ENCODE measurements at regions of chr6 and their contacts with region 1.

Region 1: GRCh38 chr6:167141667-167142432 is 15.9 kb downstream of the GPR31 start:
- DNase-seq: no peak
- ATAC-seq: peak; percentile 96
- H3K4me3 ChIP-seq: no peak overlapping the region
- H3K27ac ChIP-seq: no peak overlapping the region
- H3K4me1 ChIP-seq: peaks cover 10% of the 10 kb centered on the region
- H3K27me3 ChIP-seq: no peaks in the 10 kb centered on the region
- CTCF ChIP-seq: peak; percentile 94 to 98 (median 96); a peak in 5 of 6 replicates
- EP300 ChIP-seq: no peak
- POLR2A ChIP-seq: no peak
- RAD21 ChIP-seq: peak; percentile 99

Region 2: GRCh38 chr6:166950443-166950821 is 191.4 kb before region 1 on chr6:
- CTCF ChIA-PET with region 1: interaction called, 18 read pairs
- POLR2A ChIA-PET with region 1: interaction called, 7 read pairs
- RAD21 ChIA-PET with region 1: interaction called, 10 read pairs
- SMC1A ChIA-PET with region 1: interaction called, 12 read pairs
- in situ Hi-C with region 1: no loop called
- intact Hi-C with region 1: loop called (anchors 2 kb)
- DNase-seq: no peak
- ATAC-seq: peak; percentile 68
- H3K4me3 ChIP-seq: peak overlapping the region; percentile 71
- H3K27ac ChIP-seq: peak overlapping the region; percentile 96
- H3K4me1 ChIP-seq: peaks cover 42% of the 10 kb centered on the region
- H3K27me3 ChIP-seq: no peaks in the 10 kb centered on the region
- CTCF ChIP-seq: no peak
- EP300 ChIP-seq: no peak
- POLR2A ChIP-seq: peak; percentile 76
- RAD21 ChIP-seq: no peak

Region 3: DNA sequence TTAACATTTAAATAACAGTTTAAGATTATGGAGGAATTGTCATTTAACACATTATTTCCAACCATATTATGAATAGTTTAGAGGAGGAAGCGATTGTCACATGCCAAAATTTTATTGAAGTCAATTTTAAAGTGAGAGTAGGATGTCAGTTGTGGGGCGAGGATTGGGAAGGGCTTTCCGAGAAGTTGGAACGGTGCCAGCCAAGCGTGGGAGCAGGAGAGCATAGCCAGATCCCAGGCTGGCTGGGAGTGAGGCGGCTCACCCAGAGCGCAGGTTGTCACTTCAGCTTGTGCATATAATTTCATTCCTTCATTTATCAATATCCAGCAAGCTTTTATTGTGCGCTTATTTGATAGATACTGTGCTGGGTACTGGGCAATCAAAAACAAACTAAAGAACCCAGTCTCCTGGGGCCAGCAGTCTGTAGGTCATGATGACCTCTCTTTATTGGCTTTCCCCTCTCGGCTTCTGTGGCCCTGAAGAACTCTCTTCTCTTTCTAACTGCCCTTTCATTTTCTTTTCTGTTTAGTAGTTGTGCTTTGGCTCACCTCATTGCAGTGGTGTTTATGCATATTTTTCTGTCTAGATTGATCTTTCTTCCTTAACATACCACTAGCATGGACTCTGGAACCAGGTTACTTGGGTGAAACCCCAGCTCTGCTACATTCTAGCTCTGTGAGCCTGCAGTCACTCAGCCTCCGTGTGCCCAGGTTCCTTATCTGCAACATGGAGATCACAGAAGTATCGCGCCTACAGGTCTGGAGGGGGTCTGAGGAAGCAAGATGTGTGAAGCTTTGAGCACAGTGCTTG is 136.3 kb before region 1 on chr6:
- CTCF ChIA-PET with region 1: interaction called, 54 read pairs
- POLR2A ChIA-PET with region 1: interaction called, 5 read pairs
- RAD21 ChIA-PET with region 1: interaction called, 56 read pairs
- SMC1A ChIA-PET with region 1: interaction called, 61 read pairs
- in situ Hi-C with region 1: loop called (anchors 25 kb)
- intact Hi-C with region 1: no loop called
- DNase-seq: no peak
- ATAC-seq: no peak
- H3K4me3 ChIP-seq: no peak overlapping the region
- H3K27ac ChIP-seq: no peak overlapping the region
- H3K4me1 ChIP-seq: no peaks in the 10 kb centered on the region
- H3K27me3 ChIP-seq: no peaks in the 10 kb centered on the region
- CTCF ChIP-seq: no peak
- EP300 ChIP-seq: no peak
- POLR2A ChIP-seq: no peak
- RAD21 ChIP-seq: no peak

Region 4: GRCh38 chr6:167079853-167080297 is 62.0 kb before region 1 on chr6:
- CTCF ChIA-PET with region 1: interaction called, 4 read pairs
- POLR2A ChIA-PET with region 1: no interaction called
- RAD21 ChIA-PET with region 1: interaction called, 3 read pairs
- SMC1A ChIA-PET with region 1: interaction called, 3 read pairs
- in situ Hi-C with region 1: no loop called
- intact Hi-C with region 1: loop called (anchors 2 kb)
- DNase-seq: peak; percentile 93
- ATAC-seq: peak; percentile 99
- H3K4me3 ChIP-seq: no peak overlapping the region
- H3K27ac ChIP-seq: peak overlapping the region; percentile 79
- H3K4me1 ChIP-seq: peaks cover 31% of the 10 kb centered on the region
- H3K27me3 ChIP-seq: no peaks in the 10 kb centered on the region
- CTCF ChIP-seq: peak; percentile 70 to 81 (median 74)
- EP300 ChIP-seq: peak; percentile 64 to 84; a peak in 2 of 4 replicates
- POLR2A ChIP-seq: no peak
- RAD21 ChIP-seq: peak; percentile 83

Region 5: DNA sequence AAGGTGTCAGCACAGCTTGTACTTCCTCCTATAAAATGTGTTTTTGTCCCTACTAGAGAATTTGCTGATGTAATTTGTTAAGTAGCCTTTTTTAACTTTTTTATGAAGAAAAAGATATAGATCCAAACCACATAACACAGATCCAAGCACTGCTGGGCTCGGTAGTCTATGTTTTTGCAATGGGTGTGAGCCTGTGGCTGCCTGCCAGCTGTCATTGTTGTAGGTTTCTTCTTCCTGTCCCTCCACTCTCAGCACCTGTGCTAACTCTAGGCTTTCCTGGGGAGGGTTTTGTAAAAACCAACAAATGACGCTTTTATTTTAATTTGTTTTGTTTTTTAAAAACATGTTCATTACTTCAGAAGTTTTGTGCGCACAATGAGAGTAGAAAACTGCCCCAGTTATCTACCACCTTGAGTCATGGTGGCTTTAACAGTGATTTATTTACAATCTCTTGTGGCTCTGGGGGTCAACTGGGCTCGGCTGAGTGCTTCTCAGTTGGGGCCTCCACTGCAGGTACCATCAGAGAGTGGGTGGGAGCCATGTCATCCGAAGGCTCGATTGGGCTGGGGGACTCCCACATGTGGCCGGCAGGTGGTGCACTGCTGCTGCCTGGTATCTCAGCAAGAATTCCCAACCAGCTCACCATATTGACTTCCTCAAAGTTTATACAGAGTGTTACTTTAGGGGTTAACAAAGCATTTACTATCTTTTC is 22.0 kb before region 1 on chr6:
- CTCF ChIA-PET with region 1: interaction called, 57 read pairs
- POLR2A ChIA-PET with region 1: interaction called, 15 read pairs
- RAD21 ChIA-PET with region 1: interaction called, 120 read pairs
- SMC1A ChIA-PET with region 1: interaction called, 351 read pairs
- in situ Hi-C with region 1: no loop called
- intact Hi-C with region 1: no loop called
- DNase-seq: no peak
- ATAC-seq: no peak
- H3K4me3 ChIP-seq: no peak overlapping the region
- H3K27ac ChIP-seq: peak overlapping the region; percentile 66; the same call in 1 of the 2 replicates
- H3K4me1 ChIP-seq: peaks cover 69% of the 10 kb centered on the region
- H3K27me3 ChIP-seq: no peaks in the 10 kb centered on the region
- CTCF ChIP-seq: peak; percentile 18 to 58 (median 56); a peak in 5 of 6 replicates
- EP300 ChIP-seq: no peak
- POLR2A ChIP-seq: no peak
- RAD21 ChIP-seq: peak; percentile 30

Measured in GM12878 (cell line).